ENCODE measurements at regions of chr12 and their contacts with region 1.

Region 1: DNA sequence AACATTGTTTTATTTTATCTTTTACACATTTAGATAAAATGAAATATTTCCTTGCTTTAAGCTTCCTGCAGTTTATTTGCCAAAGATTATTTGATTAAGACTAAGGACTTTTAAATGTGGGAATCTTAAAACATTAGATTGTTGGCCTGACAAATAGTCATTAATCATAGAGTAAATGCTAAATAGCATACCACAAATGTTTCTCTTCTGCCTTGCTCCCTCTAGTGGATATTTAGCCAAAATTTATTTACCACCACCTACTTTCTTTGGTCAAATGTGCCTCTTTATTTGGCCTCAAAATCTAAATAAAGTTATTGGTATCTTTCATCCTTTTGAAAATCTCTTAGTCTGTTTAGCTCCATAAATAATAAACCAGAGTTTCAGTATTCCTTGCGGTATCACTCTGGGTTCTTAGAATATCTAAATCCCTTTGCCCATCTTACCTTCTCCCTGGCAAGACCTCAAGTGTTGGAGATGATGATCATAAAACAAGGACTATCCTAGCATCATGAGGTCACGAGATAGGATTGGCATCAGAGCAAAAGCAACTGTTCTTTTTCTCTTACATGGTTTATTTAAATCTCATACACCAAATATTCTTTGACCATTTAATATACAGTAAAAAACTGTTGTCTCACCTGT is 150.6 kb upstream of the AEBP2 start:
- DNase-seq: no peak
- ATAC-seq: peak in 1 of 4 donors; percentile 56
- H3K4me3 ChIP-seq: no peak overlapping the region
- H3K27ac ChIP-seq: no peak overlapping the region
- H3K4me1 ChIP-seq: peaks cover 0 to 5% (median 0%) of the 10 kb centered on the region in 12 donors
- H3K27me3 ChIP-seq: no peaks in the 10 kb centered on the region
- CTCF ChIP-seq: peak; percentile 48 to 73 (median 67)
- POLR2A ChIP-seq: no peak

Region 2: DNA sequence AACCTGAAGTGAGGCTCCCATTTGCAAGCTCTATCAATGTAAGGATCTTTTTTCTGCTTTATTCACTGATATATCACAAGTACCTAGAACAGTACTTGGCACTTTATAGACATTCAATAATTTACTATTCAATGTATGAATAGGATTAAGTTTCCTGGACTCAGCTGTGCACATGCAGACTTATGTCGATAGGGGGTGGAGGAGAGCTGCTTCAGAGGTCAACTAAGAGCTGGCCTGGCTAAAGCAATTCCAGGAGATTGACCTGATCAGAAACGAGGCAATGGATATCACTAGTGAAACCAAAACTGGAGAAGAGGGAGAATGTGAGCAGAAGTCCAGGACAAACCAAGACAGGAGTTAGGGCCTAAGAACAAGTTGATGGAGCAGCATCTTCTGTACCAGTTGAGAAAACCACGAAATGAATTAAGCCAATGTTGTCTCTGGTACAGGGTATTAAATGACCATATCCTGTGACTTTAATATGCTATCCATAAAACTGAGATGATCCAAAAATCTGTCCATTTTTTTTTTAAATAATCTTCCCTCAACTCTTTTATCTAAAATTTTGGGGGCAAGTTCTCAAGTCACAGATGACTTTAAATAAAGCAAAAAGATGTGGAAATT is 858.2 kb before region 1 on chr12:
- intact Hi-C with region 1: loop called in 4 of 10 experiments (anchors 5 to 10 kb)
- DNase-seq: peak in 3 of 5 donors; percentile 31 to 35 (median 33)
- ATAC-seq: peak; percentile 64 to 92 (median 87)
- H3K4me3 ChIP-seq: no peak overlapping the region
- H3K27ac ChIP-seq: no peak overlapping the region
- H3K4me1 ChIP-seq: peaks cover 0 to 16% (median 2%) of the 10 kb centered on the region in 12 donors
- H3K27me3 ChIP-seq: no peaks in the 10 kb centered on the region
- CTCF ChIP-seq: peak; percentile 56 to 90 (median 78)
- POLR2A ChIP-seq: no peak

Region 3: DNA sequence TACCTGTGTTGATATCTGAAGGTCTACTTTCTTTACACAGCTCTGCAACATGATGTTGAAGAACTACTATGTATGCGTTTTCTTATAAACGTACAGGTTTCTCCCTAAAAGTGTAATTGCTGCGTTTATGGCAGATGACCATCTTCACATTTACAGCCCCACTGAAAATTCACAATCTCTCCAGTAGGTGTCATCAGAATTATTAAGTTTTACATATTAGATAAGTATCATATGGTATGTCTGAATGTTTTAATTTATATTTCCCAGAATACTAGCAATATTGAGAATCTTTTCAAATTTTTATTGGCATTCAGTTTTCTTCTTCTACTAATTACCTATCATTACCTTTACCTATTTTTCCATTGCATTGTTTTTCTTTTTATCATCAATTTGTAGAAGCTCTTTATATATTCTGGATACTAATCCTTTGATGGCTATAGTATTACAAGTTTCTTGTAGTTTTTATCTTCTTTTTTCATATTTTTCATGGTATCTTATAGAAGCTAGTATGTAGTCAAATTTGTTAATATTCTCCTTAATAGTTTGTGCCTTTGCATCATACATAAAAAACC is 427.4 kb before region 1 on chr12:
- intact Hi-C with region 1: loop called in 2 of 10 experiments (anchors 10 kb)
- DNase-seq: no peak
- ATAC-seq: no peak
- H3K4me3 ChIP-seq: no peak overlapping the region
- H3K27ac ChIP-seq: no peak overlapping the region
- H3K4me1 ChIP-seq: peaks cover 0 to 7% (median 0%) of the 10 kb centered on the region in 12 donors
- H3K27me3 ChIP-seq: no peaks in the 10 kb centered on the region
- CTCF ChIP-seq: peak; percentile 29 to 57 (median 48)
- POLR2A ChIP-seq: no peak

Region 4: DNA sequence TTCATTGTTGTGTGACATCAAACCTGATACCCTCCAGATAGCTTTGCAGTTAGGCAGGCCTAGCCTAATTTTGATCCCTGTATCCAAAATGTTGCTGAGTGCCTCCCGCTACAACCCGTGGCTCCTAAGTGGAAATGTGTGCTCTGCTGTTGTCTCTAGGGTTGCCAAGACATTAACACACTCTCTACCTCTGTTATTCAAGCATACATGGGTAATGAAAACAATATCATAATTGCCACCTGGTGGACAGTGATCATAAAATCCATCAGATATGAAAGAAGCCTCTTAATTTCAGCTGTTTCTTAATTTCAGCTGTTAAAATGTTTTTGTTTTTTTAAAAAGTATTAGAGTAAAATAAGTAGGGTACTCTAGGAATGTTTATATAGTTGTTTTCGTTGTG is 65.7 kb before region 1 on chr12:
- intact Hi-C with region 1: loop called in 1 of 10 experiments (anchors 10 kb)
- DNase-seq: no peak
- ATAC-seq: peak; percentile 77 to 94 (median 80)
- H3K4me3 ChIP-seq: no peak overlapping the region
- H3K27ac ChIP-seq: peak overlapping the region in 10 of 12 donors; percentile 1 to 52 (median 25)
- H3K4me1 ChIP-seq: peaks cover 0 to 42% (median 22%) of the 10 kb centered on the region in 12 donors
- H3K27me3 ChIP-seq: no peaks in the 10 kb centered on the region
- CTCF ChIP-seq: peak in 8 of 12 donors; percentile 8 to 35 (median 16)
- POLR2A ChIP-seq: no peak

Region 5: GRCh38 chr12:19439059-19440018 is 150.6 kb after region 1 on chr12 and contains the start of gene AEBP2:
- intact Hi-C with region 1: loop called in 1 of 10 experiments (anchors 10 kb)
- DNase-seq: peak; percentile 95 to 97 (median 95)
- ATAC-seq: peak; percentile 95 to 98 (median 97)
- H3K4me3 ChIP-seq: peak within 1 kb of the TSS; percentile 82 to 99 (median 94)
- H3K27ac ChIP-seq: peak within 1 kb of the TSS; percentile 75 to 97 (median 92)
- H3K4me1 ChIP-seq: peaks cover 0 to 34% (median 26%) of the 10 kb centered on the region in 12 donors
- H3K27me3 ChIP-seq: no peaks in the 10 kb centered on the region
- CTCF ChIP-seq: peak in 1 of 12 donors; percentile 10
- POLR2A ChIP-seq: peak in 1 of 2 donors; percentile 75
- total RNA-seq, gene AEBP2: 13.1 to 36.5 (median 24.7) TPM

Region 6: DNA sequence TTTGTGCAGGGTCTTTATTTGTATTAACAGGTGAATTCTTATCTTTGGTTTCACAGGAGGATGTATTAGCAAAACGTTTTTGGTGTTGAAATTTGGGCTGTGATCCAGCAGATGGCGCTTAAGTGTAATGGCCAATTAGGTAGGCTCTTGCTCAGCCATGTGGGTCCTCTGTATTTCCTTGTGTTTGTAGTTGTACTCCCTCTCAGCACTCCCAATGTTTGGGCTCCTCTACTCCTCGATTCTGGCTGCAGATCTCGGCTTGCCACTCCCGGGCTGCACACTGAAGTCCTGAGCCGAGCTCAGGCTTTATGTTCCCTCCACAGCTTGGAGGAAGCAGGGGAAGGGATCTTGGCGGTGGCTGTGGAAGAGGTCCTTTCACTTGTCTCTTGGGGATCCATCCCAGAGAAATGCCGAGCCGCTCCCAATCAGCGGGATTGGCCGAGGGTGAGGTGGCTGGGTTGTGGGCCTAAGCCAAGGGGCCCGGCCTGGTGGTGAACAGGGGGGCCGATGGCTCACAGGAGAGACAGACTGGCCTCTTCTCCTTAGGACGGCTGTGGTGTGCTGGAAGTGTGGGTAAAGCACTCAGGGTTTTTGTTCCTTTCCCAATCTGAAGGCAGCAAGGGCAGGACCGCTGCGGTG is 284.3 kb after region 1 on chr12:
- intact Hi-C with region 1: no loop called
- DNase-seq: no peak
- ATAC-seq: no peak
- H3K4me3 ChIP-seq: no peak overlapping the region
- H3K27ac ChIP-seq: no peak overlapping the region
- H3K4me1 ChIP-seq: peaks cover 3 to 30% (median 17%) of the 10 kb centered on the region in 12 donors
- H3K27me3 ChIP-seq: no peaks in the 10 kb centered on the region
- CTCF ChIP-seq: peak in 7 of 12 donors; percentile 8 to 43 (median 28)
- POLR2A ChIP-seq: no peak

Measured in heart left ventricle (tissue), 16 donors.